Activated CD8-positive, alpha-beta memory T cell treated with anti-CD3 and anti-CD28 coated beads, Interleukin-2, amount 10 ng/mL, durations not matched to agents 7 days and 5 days (primary cell): ENCODE measurements at regions of chrX and their contacts with region 1.

Region 1: DNA sequence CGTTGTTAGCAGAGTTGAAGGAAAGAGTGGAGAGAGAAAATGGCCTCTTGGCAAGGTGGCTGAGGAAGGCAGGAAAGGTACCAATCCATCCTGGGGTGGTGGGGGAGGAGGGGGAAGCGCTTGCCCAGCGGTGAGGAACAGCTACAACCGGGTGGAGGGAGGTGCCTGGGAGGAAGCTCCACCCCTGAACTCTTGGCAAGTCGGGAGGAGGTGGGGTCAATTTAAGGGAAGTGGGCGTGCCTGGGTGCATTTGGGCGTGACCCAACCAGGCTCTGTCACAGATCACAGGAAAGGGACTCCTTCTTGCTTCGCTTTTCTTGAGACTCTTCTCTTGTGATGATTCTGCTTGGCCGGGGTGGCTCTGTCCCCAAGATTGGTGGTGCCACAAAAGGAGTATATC is 41.7 kb downstream of the BCORL1 start:
- DNase-seq: peak; percentile 92
- ATAC-seq: peak; percentile 100
- H3K4me3 Mint-ChIP-seq: peak overlapping the region; percentile 64
- H3K27ac Mint-ChIP-seq: peak overlapping the region; percentile 77
- H3K4me1 Mint-ChIP-seq: peaks cover 13% of the 10 kb centered on the region
- H3K27me3 Mint-ChIP-seq: no peaks in the 10 kb centered on the region

Region 2: DNA sequence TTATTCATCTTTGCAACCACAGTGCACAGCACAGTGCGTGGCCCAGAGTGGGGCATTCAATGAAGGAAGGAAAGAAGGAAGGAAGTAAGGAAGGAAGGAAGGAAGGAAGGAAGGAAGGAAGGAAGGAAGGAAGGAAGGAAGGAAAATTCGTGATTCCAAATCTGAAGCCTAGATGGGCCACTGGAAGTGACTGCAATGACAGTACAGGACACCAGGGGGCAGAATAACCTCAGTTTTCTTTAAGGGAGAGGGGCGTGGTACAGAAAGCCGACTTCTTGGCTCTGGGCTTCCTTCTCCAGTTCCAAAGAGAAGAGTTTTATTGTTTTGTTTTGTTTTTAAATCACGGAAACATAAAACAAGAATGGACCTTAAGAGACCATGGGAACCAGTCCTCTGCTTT is 417.2 kb before region 1 on chrX:
- CTCF ChIA-PET with region 1: interaction called, 15 read pairs
- DNase-seq: peak; percentile 56
- ATAC-seq: peak; percentile 45
- H3K4me3 Mint-ChIP-seq: no peak overlapping the region
- H3K27ac Mint-ChIP-seq: no peak overlapping the region
- H3K4me1 Mint-ChIP-seq: peaks cover 23% of the 10 kb centered on the region
- H3K27me3 Mint-ChIP-seq: no peaks in the 10 kb centered on the region

Region 3: GRCh38 chrX:129925305-129926092 is 98.6 kb before region 1 on chrX:
- CTCF ChIA-PET with region 1: interaction called, 107 read pairs
- DNase-seq: peak; percentile 79
- ATAC-seq: peak; percentile 80
- H3K4me3 Mint-ChIP-seq: no peak overlapping the region
- H3K27ac Mint-ChIP-seq: peak overlapping the region; percentile 40
- H3K4me1 Mint-ChIP-seq: peaks cover 4% of the 10 kb centered on the region
- H3K27me3 Mint-ChIP-seq: no peaks in the 10 kb centered on the region

Region 4: GRCh38 chrX:129931411-129932015 is 92.6 kb before region 1 on chrX:
- CTCF ChIA-PET with region 1: interaction called, 107 read pairs
- DNase-seq: peak; percentile 89
- ATAC-seq: peak; percentile 73
- H3K4me3 Mint-ChIP-seq: peak overlapping the region; percentile 78
- H3K27ac Mint-ChIP-seq: peak overlapping the region; percentile 93
- H3K4me1 Mint-ChIP-seq: peaks cover 5% of the 10 kb centered on the region
- H3K27me3 Mint-ChIP-seq: peaks cover 19% of the 10 kb centered on the region

Region 5: DNA sequence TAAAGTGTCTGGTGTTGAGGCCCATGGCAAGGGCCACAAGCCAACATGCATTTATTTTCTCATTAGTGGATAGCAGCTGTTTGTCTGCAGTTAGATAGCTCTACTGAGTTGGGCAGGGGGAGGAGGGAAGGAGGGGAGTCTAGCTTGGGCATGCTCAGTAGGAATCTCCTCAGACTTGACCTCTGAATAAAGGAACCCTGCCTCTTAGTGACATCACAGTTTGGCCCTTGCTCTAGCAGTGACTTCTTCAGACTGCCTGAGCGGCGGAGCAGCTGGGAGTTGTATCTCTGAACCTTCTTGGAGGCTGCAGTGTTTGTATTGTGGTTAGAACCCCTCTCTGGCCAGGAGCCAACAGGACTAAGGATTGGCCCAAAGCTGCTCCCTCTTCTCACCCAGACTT is 15.7 kb after region 1 on chrX:
- CTCF ChIA-PET with region 1: interaction called, 11 read pairs
- DNase-seq: no peak
- ATAC-seq: no peak
- H3K4me3 Mint-ChIP-seq: no peak overlapping the region
- H3K27ac Mint-ChIP-seq: no peak overlapping the region
- H3K4me1 Mint-ChIP-seq: no peaks in the 10 kb centered on the region
- H3K27me3 Mint-ChIP-seq: no peaks in the 10 kb centered on the region